ENCODE measurements at regions of chrX and their contacts with region 1.

Region 1: GRCh38 chrX:136880452-136881013 is at the start of gene RBMX:
- DNase-seq: peak; percentile 88 to 91 (median 90)
- H3K4me3 ChIP-seq: peak within 1 kb of the TSS; percentile 86 to 90
- H3K4me3 Mint-ChIP-seq: peak within 1 kb of the TSS; percentile 93 to 99 (median 98)
- H3K27ac ChIP-seq: peak within 1 kb of the TSS; percentile 99
- H3K27ac Mint-ChIP-seq: peak within 1 kb of the TSS; percentile 97 to 100 (median 99)
- H3K4me1 ChIP-seq: peaks cover 17% of the 10 kb centered on the region
- H3K4me1 Mint-ChIP-seq: peaks cover 1 to 30% (median 16%) of the 10 kb centered on the region in 4 donors
- H3K27me3 ChIP-seq: no peaks in the 10 kb centered on the region
- H3K27me3 Mint-ChIP-seq: no peaks in the 10 kb centered on the region
- total RNA-seq, gene RBMX: 239 to 246 TPM

Region 2: DNA sequence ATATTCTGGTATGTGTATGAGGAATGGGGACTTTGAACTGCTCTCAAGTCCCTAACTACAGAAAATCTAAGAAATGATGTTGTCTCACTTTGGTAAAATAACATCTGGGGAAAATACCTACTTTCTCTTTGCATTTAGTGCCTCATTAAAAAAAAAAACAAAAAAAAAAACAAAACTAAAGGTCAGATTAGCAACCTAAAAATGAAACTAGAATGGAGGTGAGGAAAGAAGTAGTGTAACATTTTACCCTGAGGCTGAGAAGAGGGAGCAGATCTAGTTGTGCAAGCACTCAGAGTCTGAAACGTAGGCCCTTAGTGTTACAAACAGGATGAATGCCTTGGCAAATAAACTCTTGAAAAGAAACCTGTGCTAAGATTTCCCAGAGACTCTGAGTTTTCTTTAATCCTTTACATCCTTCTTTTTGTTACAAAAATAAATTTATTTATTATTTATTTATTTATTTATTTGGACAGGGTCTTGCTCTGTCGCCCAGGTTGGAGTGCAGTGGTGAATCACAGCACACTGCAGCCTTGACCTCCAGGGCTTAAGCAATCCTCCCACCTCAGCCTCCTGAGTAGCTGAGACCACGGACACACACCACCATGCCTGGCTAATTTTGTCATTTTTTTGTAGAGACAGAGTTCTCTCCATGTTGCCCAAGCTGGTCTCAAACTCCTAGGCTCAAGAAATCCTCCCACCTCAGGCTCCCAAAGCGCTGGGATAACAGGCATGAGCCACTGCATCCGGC is 292.3 kb before region 1 on chrX:
- CTCF ChIA-PET with region 1: no interaction called
- POLR2A ChIA-PET with region 1: interaction called, 11 read pairs
- intact Hi-C with region 1: no loop called
- DNase-seq: peak in 4 of 5 donors; percentile 26 to 54 (median 38)
- H3K4me3 ChIP-seq: no peak overlapping the region
- H3K4me3 Mint-ChIP-seq: peak overlapping the region in 7 of 8 donors; percentile 24 to 86 (median 49)
- H3K27ac ChIP-seq: peak overlapping the region; percentile 71
- H3K27ac Mint-ChIP-seq: peak overlapping the region; percentile 90 to 97 (median 93)
- H3K4me1 ChIP-seq: peaks cover 69% of the 10 kb centered on the region
- H3K4me1 Mint-ChIP-seq: peaks cover 40 to 70% (median 53%) of the 10 kb centered on the region in 4 donors
- H3K27me3 ChIP-seq: no peaks in the 10 kb centered on the region
- H3K27me3 Mint-ChIP-seq: no peaks in the 10 kb centered on the region

Region 3: DNA sequence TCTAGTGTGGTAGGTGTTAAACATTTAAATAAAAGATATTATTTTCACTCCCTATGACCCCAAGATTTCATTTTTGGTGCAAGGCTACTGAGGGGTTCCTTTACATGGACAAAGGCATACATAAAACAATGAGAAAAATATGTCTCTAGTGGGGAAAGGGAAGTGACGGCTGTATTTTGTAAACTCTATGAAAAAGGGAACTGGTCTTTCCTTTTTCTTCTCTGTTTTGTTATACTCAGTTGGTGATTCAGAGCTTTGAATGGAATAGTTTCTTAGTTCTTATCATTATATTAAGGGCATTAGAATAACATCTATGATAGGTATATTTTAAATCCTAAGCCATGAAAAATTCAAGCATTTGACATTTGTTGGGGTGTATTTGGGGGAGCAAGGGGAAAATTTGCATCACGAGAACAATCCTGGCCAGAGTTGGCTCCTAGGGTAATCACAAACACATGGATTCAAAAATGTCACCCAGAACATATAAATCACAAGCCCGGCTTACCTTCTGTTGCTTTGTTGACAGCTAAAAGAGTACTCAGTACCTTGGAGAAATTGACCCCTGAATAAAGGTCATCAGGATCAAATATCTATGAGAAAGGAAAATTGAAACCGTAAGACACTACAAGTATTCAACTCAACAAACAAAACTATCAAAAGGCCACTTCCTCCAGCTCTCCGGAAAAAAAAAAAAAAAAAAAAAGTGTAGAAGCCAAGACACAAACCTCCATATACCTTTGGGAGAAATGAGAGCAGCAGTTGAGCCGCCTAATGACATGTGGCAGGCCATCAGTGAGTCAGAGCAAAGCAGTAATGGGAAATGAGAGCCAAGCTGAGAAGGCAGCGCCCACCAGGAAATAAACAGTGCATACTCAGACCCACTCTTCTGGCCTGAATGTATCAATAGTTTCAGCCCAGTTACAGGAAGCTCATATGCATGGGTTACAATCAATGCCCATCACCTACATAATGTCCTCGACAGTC is 133.2 kb before region 1 on chrX:
- CTCF ChIA-PET with region 1: no interaction called
- POLR2A ChIA-PET with region 1: interaction called, 14 read pairs
- intact Hi-C with region 1: no loop called
- DNase-seq: no peak
- H3K4me3 ChIP-seq: no peak overlapping the region
- H3K4me3 Mint-ChIP-seq: peak overlapping the region; percentile 17 to 70 (median 51)
- H3K27ac ChIP-seq: peak overlapping the region; percentile 31
- H3K27ac Mint-ChIP-seq: peak overlapping the region; percentile 39 to 83 (median 71)
- H3K4me1 ChIP-seq: peaks cover 88% of the 10 kb centered on the region
- H3K4me1 Mint-ChIP-seq: peaks cover 54 to 89% (median 65%) of the 10 kb centered on the region in 4 donors
- H3K27me3 ChIP-seq: no peaks in the 10 kb centered on the region
- H3K27me3 Mint-ChIP-seq: no peaks in the 10 kb centered on the region

Region 4: DNA sequence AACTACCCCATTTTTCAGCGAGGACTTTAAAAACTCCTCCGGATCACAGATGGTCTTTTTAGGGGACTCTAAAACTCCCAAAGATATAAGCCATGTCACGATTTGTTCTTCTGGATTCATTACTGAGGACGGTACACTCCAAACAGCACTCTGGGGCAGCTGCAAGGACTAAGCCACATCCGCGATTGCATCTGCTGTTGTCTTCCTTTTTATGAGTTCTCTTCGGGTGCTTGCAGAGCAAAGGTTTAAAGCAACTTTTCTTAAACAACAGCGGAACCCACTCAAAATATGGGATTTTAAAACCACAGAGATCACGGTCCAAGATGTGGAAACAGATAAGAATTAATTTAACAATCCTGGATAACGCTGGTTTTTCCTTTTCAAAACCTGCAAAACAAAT is 99.8 kb before region 1 on chrX and contains the start of gene ARHGEF6:
- CTCF ChIA-PET with region 1: interaction called, 3 read pairs
- POLR2A ChIA-PET with region 1: interaction called, 68 read pairs
- intact Hi-C with region 1: loop called (anchors 1 kb)
- DNase-seq: peak; percentile 40 to 53 (median 43)
- H3K4me3 ChIP-seq: peak within 1 kb of the TSS; percentile 60 to 82
- H3K4me3 Mint-ChIP-seq: peak within 1 kb of the TSS; percentile 86 to 95 (median 94)
- H3K27ac ChIP-seq: peak within 1 kb of the TSS; percentile 69
- H3K27ac Mint-ChIP-seq: peak within 1 kb of the TSS; percentile 87 to 92 (median 90)
- H3K4me1 ChIP-seq: peaks cover 58% of the 10 kb centered on the region
- H3K4me1 Mint-ChIP-seq: peaks cover 41 to 83% (median 52%) of the 10 kb centered on the region in 4 donors
- H3K27me3 ChIP-seq: no peaks in the 10 kb centered on the region
- H3K27me3 Mint-ChIP-seq: no peaks in the 10 kb centered on the region
- total RNA-seq, gene ARHGEF6: 81.3 to 83.4 TPM

Region 5: DNA sequence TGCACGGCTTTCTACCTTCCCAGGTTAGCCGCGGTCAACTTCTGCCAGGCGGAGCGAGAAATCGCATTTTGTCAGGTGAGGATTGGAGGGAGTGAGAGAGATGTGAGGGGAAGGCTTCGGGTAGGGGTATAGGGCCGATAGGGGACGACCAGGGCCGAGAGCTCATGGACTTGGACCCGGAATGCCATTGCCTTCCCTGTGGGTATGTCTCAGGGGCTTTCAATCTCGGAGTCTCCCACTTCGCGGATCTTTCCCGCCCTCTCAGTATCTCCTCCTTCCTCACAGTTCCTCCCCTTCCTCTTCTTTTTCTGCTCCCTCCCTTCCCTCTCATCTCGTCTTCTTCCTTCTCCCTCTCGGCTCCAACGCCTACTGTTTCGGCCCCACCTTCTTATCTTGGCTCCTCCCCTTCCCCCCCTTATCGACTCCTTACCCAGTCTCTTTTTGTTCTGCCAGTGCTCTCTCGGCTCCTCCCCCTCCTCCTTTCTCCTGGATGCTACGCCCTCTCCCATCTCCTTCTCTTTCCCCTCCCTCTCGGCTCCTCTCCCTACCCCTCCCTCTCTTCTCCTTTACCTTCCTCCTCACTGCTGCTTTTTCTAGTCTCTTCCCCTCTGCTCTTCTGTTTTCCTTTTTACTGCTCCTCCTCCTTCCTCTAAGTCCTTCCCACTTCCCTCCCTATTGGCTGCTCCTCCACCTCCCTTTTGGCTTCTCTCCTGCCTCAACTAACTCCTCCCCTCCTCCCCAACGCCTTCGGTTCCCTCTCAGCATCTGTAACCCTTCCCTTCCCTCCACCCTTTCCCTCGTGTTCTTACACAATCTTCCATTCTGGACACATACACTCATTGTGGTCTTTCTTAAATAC is 29.4 kb after region 1 on chrX:
- CTCF ChIA-PET with region 1: no interaction called
- POLR2A ChIA-PET with region 1: interaction called, 14 read pairs
- intact Hi-C with region 1: loop called (anchors 1 kb)
- DNase-seq: peak; percentile 43 to 79 (median 48)
- H3K4me3 ChIP-seq: peak overlapping the region; percentile 61 to 83
- H3K4me3 Mint-ChIP-seq: peak overlapping the region; percentile 88 to 96 (median 94)
- H3K27ac ChIP-seq: peak overlapping the region; percentile 90
- H3K27ac Mint-ChIP-seq: peak overlapping the region; percentile 80 to 97 (median 93)
- H3K4me1 ChIP-seq: peaks cover 7% of the 10 kb centered on the region
- H3K4me1 Mint-ChIP-seq: peaks cover 8 to 22% (median 11%) of the 10 kb centered on the region in 4 donors
- H3K27me3 ChIP-seq: no peaks in the 10 kb centered on the region
- H3K27me3 Mint-ChIP-seq: no peaks in the 10 kb centered on the region

Region 6: GRCh38 chrX:137574102-137574783 is 693.7 kb after region 1 on chrX:
- CTCF ChIA-PET with region 1: no interaction called
- POLR2A ChIA-PET with region 1: no interaction called
- intact Hi-C with region 1: no loop called
- DNase-seq: no peak
- H3K4me3 ChIP-seq: no peak overlapping the region
- H3K4me3 Mint-ChIP-seq: no peak overlapping the region
- H3K27ac ChIP-seq: no peak overlapping the region
- H3K27ac Mint-ChIP-seq: no peak overlapping the region
- H3K4me1 ChIP-seq: no peaks in the 10 kb centered on the region
- H3K4me1 Mint-ChIP-seq: peaks cover 0 to 1% (median 0%) of the 10 kb centered on the region in 4 donors
- H3K27me3 ChIP-seq: peaks cover 3% of the 10 kb centered on the region
- H3K27me3 Mint-ChIP-seq: peaks cover 19 to 23% of the 10 kb centered on the region in 2 donors